ENCODE measurements at regions of chr18 and their contacts with region 1.

Region 1: GRCh38 chr18:45722899-45723298 is 1.1 kb upstream of the SLC14A1 start:
- DNase-seq: peak; percentile 45 to 57 (median 53)
- H3K4me3 ChIP-seq: no peak overlapping the region
- H3K4me3 Mint-ChIP-seq: no peak overlapping the region
- H3K27ac ChIP-seq: no peak overlapping the region
- H3K27ac Mint-ChIP-seq: no peak overlapping the region
- H3K4me1 ChIP-seq: no peaks in the 10 kb centered on the region
- H3K4me1 Mint-ChIP-seq: peaks cover 0 to 8% (median 0%) of the 10 kb centered on the region in 4 donors
- H3K27me3 ChIP-seq: no peaks in the 10 kb centered on the region
- H3K27me3 Mint-ChIP-seq: no peaks in the 10 kb centered on the region

Region 2: DNA sequence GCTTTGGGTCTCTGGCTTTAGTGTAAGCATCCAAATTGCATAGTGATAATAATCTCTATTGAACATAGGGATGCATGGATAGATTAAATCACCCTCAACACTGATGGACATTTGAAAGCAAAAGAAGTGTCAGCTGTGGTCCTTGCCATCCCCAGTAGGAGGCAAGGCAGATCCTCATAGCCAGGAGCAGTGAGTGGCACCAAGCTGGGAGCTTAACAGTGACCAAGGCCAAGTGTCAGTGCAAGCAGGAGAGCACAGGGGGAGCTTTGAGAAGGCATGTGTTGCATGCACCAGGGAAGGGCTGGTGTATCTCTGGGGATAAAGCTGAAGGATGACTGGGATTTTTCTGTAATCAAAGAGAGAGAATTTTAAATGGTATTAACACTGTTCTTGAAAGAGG is 15.8 kb after region 1 on chr18:
- CTCF ChIA-PET with region 1: interaction called, 11 read pairs
- POLR2A ChIA-PET with region 1: no interaction called
- intact Hi-C with region 1: no loop called
- DNase-seq: no peak
- H3K4me3 ChIP-seq: no peak overlapping the region
- H3K4me3 Mint-ChIP-seq: no peak overlapping the region
- H3K27ac ChIP-seq: no peak overlapping the region
- H3K27ac Mint-ChIP-seq: no peak overlapping the region
- H3K4me1 ChIP-seq: no peaks in the 10 kb centered on the region
- H3K4me1 Mint-ChIP-seq: no peaks in the 10 kb centered on the region
- H3K27me3 ChIP-seq: no peaks in the 10 kb centered on the region
- H3K27me3 Mint-ChIP-seq: no peaks in the 10 kb centered on the region

Region 3: DNA sequence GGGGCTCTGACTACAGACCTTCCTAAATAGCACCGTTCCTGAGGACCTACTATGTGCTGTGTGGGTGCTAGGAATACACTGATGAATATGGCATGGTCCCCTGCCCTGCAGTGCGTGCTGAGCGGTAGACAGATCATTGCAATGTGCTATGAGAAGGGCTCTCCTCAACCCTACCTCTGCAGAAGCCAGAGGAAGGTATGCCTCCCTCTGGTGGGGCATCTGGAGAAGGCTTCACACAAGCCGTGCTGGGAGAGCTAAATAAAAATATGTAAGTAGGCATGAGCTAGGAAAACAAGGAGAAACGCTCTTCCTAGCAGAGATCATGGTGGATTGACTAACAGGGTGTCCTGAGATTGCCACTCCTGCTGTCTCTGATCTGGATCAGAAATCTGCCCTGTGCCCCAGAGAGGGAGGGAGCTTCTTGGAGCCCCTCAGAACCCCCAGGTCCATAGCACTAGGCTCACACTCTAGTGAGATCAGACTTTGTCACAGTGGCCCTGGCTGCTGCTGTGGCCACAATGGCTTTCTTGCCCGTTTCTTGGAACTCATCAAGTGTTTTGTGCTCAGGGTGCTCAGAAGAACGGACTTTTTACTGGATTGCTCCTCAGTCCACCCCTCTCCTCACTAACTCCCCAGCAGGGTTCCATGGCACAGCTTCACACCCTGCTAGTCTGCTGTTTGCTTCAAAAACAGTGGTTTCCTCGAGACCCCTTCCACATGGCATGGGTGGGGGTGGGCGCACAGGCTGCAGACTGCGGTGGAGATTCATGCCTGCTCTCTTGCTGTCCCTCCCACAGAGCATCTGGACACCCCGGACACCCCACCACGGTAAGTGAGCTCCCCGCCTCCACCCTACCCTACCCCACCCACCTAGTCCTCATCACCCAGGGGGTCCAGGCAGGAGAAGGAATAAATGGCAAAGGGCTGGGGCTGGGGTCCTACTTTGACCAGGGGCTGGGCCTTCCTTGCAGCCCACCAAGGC is 116.8 kb after region 1 on chr18:
- CTCF ChIA-PET with region 1: interaction called, 3 read pairs
- POLR2A ChIA-PET with region 1: no interaction called
- intact Hi-C with region 1: loop called (anchors 2 kb)
- DNase-seq: peak in 4 of 5 donors; percentile 26 to 43 (median 32)
- H3K4me3 ChIP-seq: no peak overlapping the region
- H3K4me3 Mint-ChIP-seq: peak overlapping the region in 7 of 8 donors; percentile 3 to 73 (median 46)
- H3K27ac ChIP-seq: no peak overlapping the region
- H3K27ac Mint-ChIP-seq: no peak overlapping the region
- H3K4me1 ChIP-seq: peaks cover 10% of the 10 kb centered on the region
- H3K4me1 Mint-ChIP-seq: peaks cover 9 to 21% (median 14%) of the 10 kb centered on the region in 4 donors
- H3K27me3 ChIP-seq: peaks cover 22% of the 10 kb centered on the region
- H3K27me3 Mint-ChIP-seq: peaks cover 30 to 32% of the 10 kb centered on the region in 2 donors

Region 4: DNA sequence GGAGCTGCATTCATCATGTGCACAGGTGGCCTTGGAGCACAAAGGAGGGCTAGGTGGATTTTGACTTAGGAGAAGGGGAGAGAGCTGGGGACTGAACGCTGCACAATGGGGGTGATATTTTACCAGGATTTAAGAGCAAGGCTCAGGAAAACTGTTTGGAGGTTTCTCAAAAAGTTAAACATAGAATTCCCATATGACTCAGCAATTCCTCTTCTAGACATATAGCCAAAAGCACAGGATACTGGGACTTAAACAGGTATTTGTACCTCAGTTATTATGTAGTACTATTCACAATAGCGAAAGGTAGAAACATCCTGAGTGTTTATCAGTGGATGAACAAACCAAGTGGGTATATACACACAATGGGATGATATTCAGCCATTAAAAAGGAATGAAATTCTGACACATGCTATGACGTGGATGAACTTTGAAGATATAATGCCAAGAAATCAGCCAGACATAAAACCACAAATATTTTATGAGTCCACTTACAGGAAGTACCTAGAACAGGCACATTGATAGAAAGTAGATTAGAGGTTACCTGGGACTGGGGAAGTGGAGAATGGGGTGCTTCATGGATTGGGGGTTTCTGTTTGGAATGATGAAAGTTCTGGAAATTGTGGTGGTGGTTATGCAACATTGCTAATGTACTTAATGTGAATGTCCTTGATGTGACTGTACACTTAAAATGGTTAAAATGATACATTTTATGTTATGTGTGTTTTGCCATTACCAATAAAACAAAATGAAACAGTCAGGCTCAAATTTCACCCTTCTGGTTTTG is 598.2 kb after region 1 on chr18:
- CTCF ChIA-PET with region 1: no interaction called
- POLR2A ChIA-PET with region 1: no interaction called
- intact Hi-C with region 1: no loop called
- DNase-seq: no peak
- H3K4me3 ChIP-seq: no peak overlapping the region
- H3K4me3 Mint-ChIP-seq: no peak overlapping the region
- H3K27ac ChIP-seq: no peak overlapping the region
- H3K27ac Mint-ChIP-seq: no peak overlapping the region
- H3K4me1 ChIP-seq: no peaks in the 10 kb centered on the region
- H3K4me1 Mint-ChIP-seq: peaks cover 0 to 8% (median 2%) of the 10 kb centered on the region in 4 donors
- H3K27me3 ChIP-seq: no peaks in the 10 kb centered on the region
- H3K27me3 Mint-ChIP-seq: no peaks in the 10 kb centered on the region

Measured in CD4-positive, alpha-beta memory T cell (primary cell).